CD4-positive, alpha-beta T cell (primary cell): ENCODE measurements at regions of chr15 and their contacts with region 1.

Region 1: GRCh38 chr15:28942046-28942445 is 56.3 kb downstream of the APBA2 start:
- DNase-seq: peak in 12 of 14 experiments; percentile 40 to 76 (median 54)
- ATAC-seq: peak; percentile 78
- H3K4me3 ChIP-seq: no peak overlapping the region
- H3K4me3 Mint-ChIP-seq: peak overlapping the region; percentile 46
- H3K27ac ChIP-seq: no peak overlapping the region
- H3K27ac Mint-ChIP-seq: peak overlapping the region; percentile 83
- H3K4me1 ChIP-seq: peaks cover 91% of the 10 kb centered on the region
- H3K4me1 Mint-ChIP-seq: peaks cover 92% of the 10 kb centered on the region
- H3K27me3 ChIP-seq: no peaks in the 10 kb centered on the region
- H3K27me3 Mint-ChIP-seq: no peaks in the 10 kb centered on the region
- CTCF ChIP-seq: no peak

Region 2: GRCh38 chr15:28957586-28958498 is 15.8 kb after region 1 on chr15:
- CTCF ChIA-PET with region 1: no interaction called
- POLR2A ChIA-PET with region 1: interaction called, 4 read pairs
- intact Hi-C with region 1: loop called in 1 of 2 experiments (anchors 2 kb)
- DNase-seq: no peak
- ATAC-seq: no peak
- H3K4me3 ChIP-seq: no peak overlapping the region
- H3K4me3 Mint-ChIP-seq: no peak overlapping the region
- H3K27ac ChIP-seq: no peak overlapping the region
- H3K27ac Mint-ChIP-seq: peak overlapping the region; percentile 29
- H3K4me1 ChIP-seq: peaks cover 40% of the 10 kb centered on the region
- H3K4me1 Mint-ChIP-seq: peaks cover 69% of the 10 kb centered on the region
- H3K27me3 ChIP-seq: no peaks in the 10 kb centered on the region
- H3K27me3 Mint-ChIP-seq: no peaks in the 10 kb centered on the region
- CTCF ChIP-seq: no peak

Region 3: DNA sequence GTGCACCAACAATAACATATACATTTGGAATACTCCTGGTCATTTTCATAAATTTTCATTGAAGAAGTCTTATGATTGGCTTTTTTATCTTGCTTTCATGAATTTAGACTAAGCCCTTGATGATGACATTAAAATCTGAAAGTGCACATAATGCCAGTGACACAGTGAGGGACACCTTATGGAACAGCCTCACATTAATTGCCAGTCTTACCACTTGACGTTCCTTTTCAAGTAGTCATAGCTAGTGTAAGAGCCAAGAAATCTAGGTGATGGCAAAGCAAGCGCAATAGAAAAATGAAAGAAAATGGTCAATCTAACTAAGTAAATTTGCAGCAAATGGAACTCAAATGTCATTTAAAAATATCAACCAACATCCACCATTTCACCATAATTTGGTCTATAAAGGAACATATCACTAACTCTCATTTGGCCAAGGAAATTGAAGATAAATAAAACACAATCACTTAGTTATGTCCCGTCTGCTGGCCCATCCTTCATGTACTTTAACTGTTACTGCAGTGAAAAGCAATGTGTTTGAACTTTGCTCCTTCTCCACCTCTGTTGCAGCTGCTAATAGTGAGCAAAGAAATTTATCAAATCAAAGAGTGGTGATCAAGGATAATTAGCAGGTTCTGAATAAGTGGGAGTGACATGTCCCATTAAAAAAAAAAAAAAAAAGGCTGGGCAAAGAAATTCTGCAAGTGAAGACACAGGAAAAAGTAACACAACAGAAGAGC is 770.3 kb after region 1 on chr15:
- CTCF ChIA-PET with region 1: no interaction called
- POLR2A ChIA-PET with region 1: no interaction called
- intact Hi-C with region 1: no loop called
- DNase-seq: no peak
- ATAC-seq: no peak
- H3K4me3 ChIP-seq: no peak overlapping the region
- H3K4me3 Mint-ChIP-seq: no peak overlapping the region
- H3K27ac ChIP-seq: no peak overlapping the region
- H3K27ac Mint-ChIP-seq: no peak overlapping the region
- H3K4me1 ChIP-seq: no peaks in the 10 kb centered on the region
- H3K4me1 Mint-ChIP-seq: no peaks in the 10 kb centered on the region
- H3K27me3 ChIP-seq: peaks cover 0 to 3% of the 10 kb centered on the region in 2 experiments
- H3K27me3 Mint-ChIP-seq: peaks cover 19% of the 10 kb centered on the region
- CTCF ChIP-seq: no peak